PC-9 (cell line): ENCODE measurements at regions of chrX and their contacts with region 1.

Region 1: GRCh38 chrX:145803508-145803907 is 14.1 kb upstream of the SLITRK2 start:
- DNase-seq: no peak
- H3K4me3 ChIP-seq: no peak overlapping the region
- H3K27ac ChIP-seq: no peak overlapping the region
- H3K4me1 ChIP-seq: no peaks in the 10 kb centered on the region
- H3K27me3 ChIP-seq: no peaks in the 10 kb centered on the region
- CTCF ChIP-seq: no peak

Region 2: GRCh38 chrX:146241902-146242301 is 438.4 kb after region 1 on chrX:
- CTCF ChIA-PET with region 1: no interaction called
- POLR2A ChIA-PET with region 1: interaction called, 10 read pairs
- intact Hi-C with region 1: no loop called
- DNase-seq: no peak
- H3K4me3 ChIP-seq: no peak overlapping the region
- H3K27ac ChIP-seq: no peak overlapping the region
- H3K4me1 ChIP-seq: no peaks in the 10 kb centered on the region
- H3K27me3 ChIP-seq: no peaks in the 10 kb centered on the region
- CTCF ChIP-seq: no peak